GM10248 (cell line): ENCODE measurements at regions of chr3 and their contacts with region 1.

Region 1: DNA sequence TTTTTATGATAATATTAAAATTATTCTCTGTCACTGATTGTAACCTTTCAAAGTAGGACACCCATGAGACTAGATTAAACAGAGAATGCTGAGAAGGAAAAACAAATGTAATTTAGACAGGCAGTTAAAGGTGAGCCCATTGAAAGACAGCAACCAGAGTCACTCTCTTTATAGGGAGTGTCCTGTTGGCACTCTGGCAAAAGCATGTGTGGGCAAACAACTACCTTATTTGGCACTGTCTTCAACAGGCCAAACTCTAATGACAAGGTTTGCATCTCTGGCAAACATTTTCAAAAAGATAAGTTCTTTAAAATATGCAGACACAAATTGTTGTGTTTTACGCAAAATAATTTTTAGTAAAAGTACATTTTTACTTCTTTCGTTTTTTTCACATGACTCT is 29.8 kb downstream of the NFKBIZ start:
- DNase-seq: no peak
- CTCF ChIP-seq: no peak

Region 2: DNA sequence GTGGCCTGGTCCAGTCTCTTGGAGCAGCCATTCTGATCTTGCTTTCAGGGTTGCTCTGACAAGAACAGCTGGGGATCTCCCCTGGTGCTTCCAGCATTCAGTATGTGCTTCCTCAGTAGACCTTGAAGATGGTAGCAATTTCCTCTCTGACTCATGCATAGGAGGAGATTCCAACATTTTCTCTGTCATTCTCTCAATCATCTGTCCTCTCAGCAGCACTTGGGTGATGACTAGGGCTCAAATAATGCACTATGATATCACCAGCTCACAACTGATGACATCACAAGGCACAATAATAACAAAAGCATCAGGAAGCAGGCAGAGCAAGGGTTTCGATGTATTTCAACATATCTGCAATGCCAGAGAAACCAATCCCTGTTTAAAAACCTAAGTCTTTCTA is 22.9 kb after region 1 on chr3:
- CTCF ChIA-PET with region 1: interaction called, 12 read pairs
- POLR2A ChIA-PET with region 1: no interaction called
- DNase-seq: no peak
- CTCF ChIP-seq: no peak